ENCODE measurements at regions of chr4 and their contacts with region 1.

Region 1: DNA sequence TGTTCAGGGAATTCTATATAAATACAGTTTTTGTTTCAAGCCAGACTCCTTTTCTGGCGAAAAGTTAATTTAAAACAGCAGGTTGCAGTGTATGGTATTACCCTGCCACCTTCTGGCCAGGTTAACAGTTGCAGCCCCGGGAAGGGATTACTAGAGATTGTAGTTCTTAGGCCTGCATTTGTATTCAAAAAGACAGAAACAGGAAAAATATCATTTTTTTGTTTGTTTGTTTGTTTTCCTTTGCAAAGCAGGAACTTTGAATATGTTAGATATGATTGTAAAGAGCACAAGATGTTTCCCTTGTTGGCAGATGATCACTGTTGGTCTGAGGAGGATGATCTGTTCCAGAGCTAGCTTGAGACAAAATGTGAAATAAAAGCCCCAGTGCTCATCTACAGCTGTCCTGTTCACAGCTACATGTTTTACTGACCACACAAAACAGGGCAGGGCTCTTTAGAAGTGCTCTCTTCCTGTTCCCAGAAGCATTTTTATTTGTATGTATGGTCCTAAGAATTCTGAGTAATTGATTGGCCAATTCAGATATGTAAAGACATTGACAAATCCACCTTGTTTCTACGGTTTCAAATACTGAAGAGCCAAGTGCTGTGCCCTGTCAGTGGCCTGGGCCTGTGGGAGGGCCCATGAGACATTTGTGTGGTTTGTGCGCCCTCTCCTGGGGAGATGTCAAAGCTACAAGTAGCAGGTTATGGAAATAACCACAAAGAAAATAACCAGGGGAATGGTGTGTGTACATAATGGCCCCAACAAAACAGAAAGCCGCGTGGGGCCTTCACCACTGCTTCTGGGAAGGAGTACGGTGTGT is 57.9 kb downstream of the CLDN22 start:
- DNase-seq: peak; percentile 70
- CTCF ChIP-seq: peak; percentile 87

Region 2: GRCh38 chr4:182932651-182933050 is 329.5 kb before region 1 on chr4:
- CTCF ChIA-PET with region 1: interaction called, 196 read pairs
- POLR2A ChIA-PET with region 1: no interaction called
- DNase-seq: no peak
- CTCF ChIP-seq: no peak

Region 3: GRCh38 chr4:183074296-183074990 is 187.7 kb before region 1 on chr4:
- CTCF ChIA-PET with region 1: interaction called, 87 read pairs
- POLR2A ChIA-PET with region 1: no interaction called
- DNase-seq: no peak
- CTCF ChIP-seq: no peak

Region 4: DNA sequence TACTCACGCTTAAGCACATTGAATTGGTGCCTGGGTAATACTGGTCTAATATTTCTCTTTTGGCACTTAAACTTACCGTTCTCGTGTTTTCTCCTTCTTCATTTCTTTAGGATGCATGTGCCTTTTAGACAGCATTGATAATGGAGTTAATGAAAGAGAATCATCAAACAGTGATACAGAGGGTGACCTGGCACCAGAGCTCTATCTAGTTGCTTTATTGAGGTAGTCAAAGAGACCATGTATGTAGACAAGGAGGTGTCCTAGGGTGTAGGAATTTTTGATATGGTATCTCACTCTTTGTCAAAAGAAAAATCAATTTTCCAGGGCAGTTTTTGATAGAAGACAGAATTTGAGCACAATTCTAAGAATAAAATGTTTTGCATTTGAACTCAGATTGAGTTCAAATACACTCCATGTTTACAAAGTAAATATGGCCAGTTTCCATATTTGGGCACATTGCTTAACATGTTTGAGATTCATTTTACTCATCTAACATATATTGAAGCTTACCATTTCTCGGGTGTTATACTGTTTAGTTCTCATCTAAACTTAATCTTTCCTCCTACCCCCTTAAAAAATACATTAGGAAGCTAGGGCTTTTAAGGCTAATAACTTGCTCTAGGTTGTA is 71.2 kb before region 1 on chr4:
- CTCF ChIA-PET with region 1: no interaction called
- POLR2A ChIA-PET with region 1: no interaction called
- DNase-seq: no peak
- CTCF ChIP-seq: no peak

Region 5: GRCh38 chr4:183240581-183241321 is 21.4 kb before region 1 on chr4:
- CTCF ChIA-PET with region 1: interaction called, 10 read pairs
- POLR2A ChIA-PET with region 1: no interaction called
- DNase-seq: no peak
- CTCF ChIP-seq: no peak

Region 6: GRCh38 chr4:183284965-183285364 is 22.8 kb after region 1 on chr4:
- CTCF ChIA-PET with region 1: interaction called, 15 read pairs
- POLR2A ChIA-PET with region 1: no interaction called
- DNase-seq: no peak
- CTCF ChIP-seq: no peak

Measured in GM10248 (cell line).